Heart left ventricle (tissue), 16 donors: ENCODE measurements at regions of chr9 and their contacts with region 1.

Region 1: GRCh38 chr9:34048923-34049697 is 423 bp upstream of the UBAP2 start:
- DNase-seq: peak; percentile 97 to 99 (median 99)
- ATAC-seq: peak; percentile 95 to 97 (median 96)
- H3K4me3 ChIP-seq: peak overlapping the region; percentile 71 to 100 (median 84)
- H3K27ac ChIP-seq: peak overlapping the region; percentile 77 to 99 (median 92)
- H3K4me1 ChIP-seq: peaks cover 3 to 32% (median 25%) of the 10 kb centered on the region in 12 donors
- H3K27me3 ChIP-seq: no peaks in the 10 kb centered on the region
- CTCF ChIP-seq: peak in 3 of 12 donors; percentile 20 to 28 (median 26)
- POLR2A ChIP-seq: no peak

Region 2: DNA sequence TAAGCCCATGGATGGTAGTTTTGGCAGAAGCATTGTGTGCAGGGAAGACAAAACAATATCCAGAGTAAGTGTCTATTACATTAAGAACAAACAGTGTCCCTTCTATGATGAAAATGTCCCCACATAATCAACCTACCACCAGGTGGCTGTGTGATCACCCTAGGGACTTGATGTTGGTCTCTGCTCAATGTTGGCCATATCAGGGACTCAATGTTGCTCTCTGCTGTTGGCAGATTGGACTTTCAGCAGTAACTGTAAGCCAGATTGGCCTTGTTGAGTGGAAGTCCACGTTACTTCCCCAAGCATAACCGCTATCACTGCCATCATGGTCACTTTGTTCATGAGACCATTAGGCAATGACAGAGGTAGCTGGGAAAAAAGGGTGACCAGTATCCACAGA is 306.6 kb before region 1 on chr9:
- intact Hi-C with region 1: no loop called
- DNase-seq: no peak
- ATAC-seq: no peak
- H3K4me3 ChIP-seq: no peak overlapping the region
- H3K27ac ChIP-seq: no peak overlapping the region
- H3K4me1 ChIP-seq: no peaks in the 10 kb centered on the region
- H3K27me3 ChIP-seq: peaks cover 0 to 2% (median 0%) of the 10 kb centered on the region in 9 donors
- CTCF ChIP-seq: no peak
- POLR2A ChIP-seq: no peak

Region 3: DNA sequence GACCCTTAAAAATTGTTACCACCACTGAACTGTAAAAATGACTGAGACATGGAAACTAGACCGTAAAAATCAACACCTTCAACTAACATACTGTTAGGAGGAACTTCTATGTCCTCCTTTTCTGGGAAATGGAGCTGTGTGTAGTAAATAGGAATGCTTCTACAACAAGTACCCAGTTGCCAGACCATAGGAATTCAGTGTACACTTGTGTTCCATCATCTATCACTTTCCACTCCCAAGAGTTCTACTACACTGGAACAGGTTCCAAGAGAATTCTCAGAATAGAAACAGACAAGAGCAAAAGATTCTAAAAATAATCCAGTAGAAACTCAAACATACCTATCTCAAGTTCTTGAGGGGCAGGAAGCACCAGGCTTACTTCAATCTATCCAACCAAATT is 24.0 kb before region 1 on chr9:
- intact Hi-C with region 1: loop called in 1 of 10 experiments (anchors 1 kb)
- DNase-seq: no peak
- ATAC-seq: peak; percentile 93 to 95 (median 95)
- H3K4me3 ChIP-seq: no peak overlapping the region
- H3K27ac ChIP-seq: peak overlapping the region in 11 of 12 donors; percentile 49 to 81 (median 72)
- H3K4me1 ChIP-seq: peaks cover 0 to 25% (median 4%) of the 10 kb centered on the region in 12 donors
- H3K27me3 ChIP-seq: no peaks in the 10 kb centered on the region
- CTCF ChIP-seq: no peak
- POLR2A ChIP-seq: no peak

Region 4: DNA sequence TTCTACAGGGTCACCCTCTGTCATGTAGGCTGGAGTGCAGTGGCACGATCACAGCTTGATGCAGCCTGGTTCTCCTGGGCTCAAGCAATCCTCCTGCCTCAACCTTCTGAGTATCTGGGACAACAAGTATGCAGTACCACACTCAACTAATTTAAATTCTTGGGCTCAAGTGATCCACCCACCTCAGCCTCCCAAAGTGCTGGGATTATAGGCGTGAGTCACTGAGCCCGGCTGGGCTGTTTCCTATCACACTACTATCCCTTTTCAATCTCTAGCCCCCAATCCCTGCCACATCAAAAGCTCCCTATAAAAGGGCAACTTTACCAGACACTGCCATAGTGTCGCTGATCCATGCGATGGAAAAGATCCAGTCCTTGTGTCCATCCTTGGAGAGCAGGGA is 57.0 kb after region 1 on chr9:
- intact Hi-C with region 1: no loop called
- DNase-seq: no peak
- ATAC-seq: no peak
- H3K4me3 ChIP-seq: no peak overlapping the region
- H3K27ac ChIP-seq: no peak overlapping the region
- H3K4me1 ChIP-seq: peaks cover 0 to 14% (median 5%) of the 10 kb centered on the region in 12 donors
- H3K27me3 ChIP-seq: no peaks in the 10 kb centered on the region
- CTCF ChIP-seq: no peak
- POLR2A ChIP-seq: no peak

Region 5: GRCh38 chr9:34126207-34127034 is 77.3 kb after region 1 on chr9 and contains the start of gene DCAF12:
- intact Hi-C with region 1: loop called in 1 of 10 experiments (anchors 10 kb)
- DNase-seq: peak; percentile 93 to 95 (median 93)
- ATAC-seq: peak; percentile 96 to 99 (median 99)
- H3K4me3 ChIP-seq: peak within 1 kb of the TSS; percentile 51 to 98 (median 85)
- H3K27ac ChIP-seq: peak within 1 kb of the TSS; percentile 75 to 99 (median 90)
- H3K4me1 ChIP-seq: peaks cover 6 to 49% (median 41%) of the 10 kb centered on the region in 12 donors
- H3K27me3 ChIP-seq: no peaks in the 10 kb centered on the region
- CTCF ChIP-seq: peak in 3 of 12 donors; percentile 13 to 23 (median 22)
- POLR2A ChIP-seq: peak in 1 of 2 donors; percentile 67
- total RNA-seq, gene DCAF12: 14.2 to 29.4 (median 16.7) TPM